ENCODE measurements at regions of chr18 and their contacts with region 1.

Region 1: GRCh38 chr18:47772374-47773248 is 157.8 kb downstream of the SMAD2 start:
- DNase-seq: peak; percentile 4
- H3K4me3 ChIP-seq: no peak overlapping the region
- CTCF ChIP-seq: peak; percentile 86

Region 2: GRCh38 chr18:47574966-47575365 is 197.6 kb before region 1 on chr18:
- CTCF ChIA-PET with region 1: no interaction called
- POLR2A ChIA-PET with region 1: no interaction called
- DNase-seq: no peak
- H3K4me3 ChIP-seq: no peak overlapping the region
- CTCF ChIP-seq: no peak

Region 3: DNA sequence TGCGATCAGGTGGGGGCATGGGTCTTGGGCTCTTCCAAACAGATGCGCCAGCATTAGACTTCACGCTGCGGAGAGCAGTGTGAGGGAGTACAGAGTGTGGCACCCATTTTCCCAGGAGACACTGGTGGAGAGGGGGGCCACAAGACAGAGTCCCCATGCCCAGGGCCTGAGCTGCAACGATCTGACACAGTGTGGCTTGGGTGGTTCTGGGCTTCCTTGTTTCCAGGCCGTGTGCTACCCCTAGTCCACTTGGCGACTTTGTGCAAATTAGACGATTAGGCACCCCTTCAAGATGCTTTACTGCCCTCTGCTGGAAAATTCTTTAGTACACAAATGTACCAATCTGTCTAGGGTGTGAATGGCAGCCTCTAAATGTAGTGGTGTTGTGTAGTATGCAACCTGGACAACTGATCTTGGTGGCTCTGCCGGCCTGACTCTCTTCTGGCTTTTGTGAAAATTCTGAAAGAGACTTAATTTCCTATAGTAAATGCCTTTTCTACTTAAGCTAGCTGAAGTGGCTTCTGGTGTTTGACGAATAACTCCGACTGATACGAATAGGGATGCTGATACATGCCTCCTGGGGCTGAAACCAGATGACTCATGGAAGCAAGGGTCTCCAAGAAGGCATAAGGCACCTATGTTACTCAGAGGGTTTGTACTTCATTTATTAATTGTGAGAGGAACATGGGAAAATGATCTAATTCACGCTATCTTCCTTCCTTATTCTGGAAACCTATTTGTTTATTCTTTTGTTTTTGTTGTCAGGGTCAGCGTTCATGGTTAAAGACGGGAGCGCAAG is 250.1 kb after region 1 on chr18:
- CTCF ChIA-PET with region 1: interaction called, 44 read pairs
- POLR2A ChIA-PET with region 1: no interaction called
- DNase-seq: no peak
- H3K4me3 ChIP-seq: no peak overlapping the region
- CTCF ChIP-seq: peak; percentile 53